Left ventricle myocardium inferior (tissue), 1 donor: ENCODE measurements at regions of chr11 and their contacts with region 1.

Region 1: GRCh38 chr11:122863704-122864326 is 18.7 kb upstream of the JHY start:
- DNase-seq: peak; percentile 32
- H3K4me3 ChIP-seq: no peak overlapping the region
- H3K27ac ChIP-seq: no peak overlapping the region
- H3K4me1 ChIP-seq: no peaks in the 10 kb centered on the region
- H3K27me3 ChIP-seq: peaks cover 68% of the 10 kb centered on the region
- CTCF ChIP-seq: peak; percentile 79

Region 2: GRCh38 chr11:123020968-123021367 is 157.2 kb after region 1 on chr11:
- intact Hi-C with region 1: loop called (anchors 5 kb)
- DNase-seq: no peak
- H3K4me3 ChIP-seq: no peak overlapping the region
- H3K27ac ChIP-seq: no peak overlapping the region
- H3K4me1 ChIP-seq: peaks cover 13% of the 10 kb centered on the region
- H3K27me3 ChIP-seq: peaks cover 28% of the 10 kb centered on the region
- CTCF ChIP-seq: peak; percentile 61

Region 3: GRCh38 chr11:123407130-123407995 is 543.5 kb after region 1 on chr11:
- intact Hi-C with region 1: no loop called
- DNase-seq: peak; percentile 43
- H3K4me3 ChIP-seq: peak overlapping the region; percentile 17
- H3K27ac ChIP-seq: peak overlapping the region; percentile 89
- H3K4me1 ChIP-seq: peaks cover 51% of the 10 kb centered on the region
- H3K27me3 ChIP-seq: no peaks in the 10 kb centered on the region
- CTCF ChIP-seq: peak; percentile 72